ENCODE measurements at regions of chr12 and their contacts with region 1.

Region 1: GRCh38 chr12:113358381-113359132 is at the start of gene PLBD2:
- DNase-seq: peak; percentile 95 to 99 (median 99)
- ATAC-seq: peak; percentile 94
- H3K4me3 ChIP-seq: peak within 1 kb of the TSS; percentile 96
- H3K27ac ChIP-seq: peak within 1 kb of the TSS; percentile 84
- H3K4me1 ChIP-seq: peaks cover 21 to 30% of the 10 kb centered on the region in 2 experiments
- H3K27me3 ChIP-seq: no peaks in the 10 kb centered on the region
- CTCF ChIP-seq: peak in 2 of 3 experiments; percentile 17 to 24; a peak in 3 of 6 replicates
- EP300 ChIP-seq: no peak
- POLR2A ChIP-seq: no peak; the same call in none of the 2 replicates
- RAD21 ChIP-seq: peak in 1 of 2 experiments; percentile 27; a peak in 2 of 4 replicates
- polyA plus RNA-seq, gene PLBD2: 5.0 to 6.0 TPM

Region 2: DNA sequence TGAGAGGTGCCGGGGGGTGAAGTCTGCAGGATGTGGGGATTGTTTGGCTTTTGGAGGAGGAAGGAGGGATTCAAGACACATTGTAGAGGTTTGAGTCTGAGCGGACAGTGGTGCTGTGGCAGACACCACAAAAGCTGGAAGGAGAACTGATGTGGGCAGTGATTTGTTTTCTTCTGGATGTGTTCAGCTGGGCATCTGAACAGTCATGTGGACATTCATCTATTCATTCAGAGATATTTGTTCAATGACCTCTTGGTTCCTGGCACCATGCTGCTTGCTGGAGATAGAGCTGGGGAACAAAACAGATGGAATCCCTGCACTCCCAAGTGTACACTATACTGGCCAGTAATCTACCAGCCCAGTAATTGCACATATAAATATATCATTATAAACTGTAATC is 875.8 kb before region 1 on chr12:
- CTCF ChIA-PET with region 1: no interaction called
- POLR2A ChIA-PET with region 1: no interaction called
- in situ Hi-C with region 1: no loop called
- intact Hi-C with region 1: no loop called
- DNase-seq: no peak
- ATAC-seq: no peak
- H3K4me3 ChIP-seq: no peak overlapping the region
- H3K27ac ChIP-seq: no peak overlapping the region
- H3K4me1 ChIP-seq: no peaks in the 10 kb centered on the region
- H3K27me3 ChIP-seq: no peaks in the 10 kb centered on the region
- CTCF ChIP-seq: no peak
- EP300 ChIP-seq: no peak
- POLR2A ChIP-seq: no peak
- RAD21 ChIP-seq: no peak

Region 3: DNA sequence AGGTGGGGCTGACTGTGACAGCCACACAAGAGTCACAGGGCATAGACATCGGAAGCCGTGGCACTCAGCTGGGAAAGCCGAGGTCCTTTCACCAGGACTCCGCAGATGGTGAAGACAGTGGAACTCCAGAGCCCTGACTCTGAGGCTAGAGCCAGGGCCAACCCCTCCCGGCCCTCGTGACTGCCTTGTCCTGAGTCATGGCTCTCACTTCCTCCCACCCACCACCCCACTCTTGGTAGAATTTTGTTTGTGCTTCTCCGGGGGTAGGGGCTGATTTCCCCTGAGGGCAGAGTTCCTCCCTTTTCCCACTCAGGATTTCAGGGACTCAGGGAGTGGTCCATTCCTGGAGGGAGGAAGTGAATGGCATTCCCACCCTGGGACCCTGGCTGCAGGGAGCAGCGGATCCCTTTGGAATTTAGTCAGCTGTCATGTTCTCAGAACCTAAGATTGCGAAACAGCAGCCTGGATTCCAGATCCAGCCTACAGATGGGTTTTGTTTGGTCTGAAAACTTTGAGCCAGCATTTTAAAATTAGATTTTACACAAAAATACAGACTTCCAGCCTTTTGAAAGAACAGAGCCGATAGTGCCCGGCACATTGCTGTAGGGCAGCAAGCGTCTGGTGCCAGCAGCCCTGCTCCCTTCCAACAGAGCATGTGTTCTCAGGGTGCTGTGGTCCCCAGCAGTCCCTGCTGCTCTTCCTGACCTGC is 86.5 kb before region 1 on chr12:
- CTCF ChIA-PET with region 1: no interaction called
- POLR2A ChIA-PET with region 1: no interaction called
- in situ Hi-C with region 1: no loop called
- intact Hi-C with region 1: no loop called
- DNase-seq: peak; percentile 50 to 74 (median 58)
- ATAC-seq: peak; percentile 94
- H3K4me3 ChIP-seq: no peak overlapping the region
- H3K27ac ChIP-seq: peak overlapping the region; percentile 34; the same call in 2 of the 3 replicates
- H3K4me1 ChIP-seq: peaks cover 13 to 16% of the 10 kb centered on the region in 2 experiments
- H3K27me3 ChIP-seq: no peaks in the 10 kb centered on the region
- CTCF ChIP-seq: no peak
- EP300 ChIP-seq: no peak
- POLR2A ChIP-seq: no peak
- RAD21 ChIP-seq: no peak

Region 4: GRCh38 chr12:113310489-113310888 is 48.1 kb before region 1 on chr12:
- CTCF ChIA-PET with region 1: interaction called, 6 read pairs
- POLR2A ChIA-PET with region 1: no interaction called
- in situ Hi-C with region 1: no loop called
- intact Hi-C with region 1: loop called (anchors 2 kb)
- DNase-seq: peak in 1 of 4 experiments; percentile 38
- ATAC-seq: peak; percentile 20; the same call in 2 of the 3 replicates
- H3K4me3 ChIP-seq: no peak overlapping the region
- H3K27ac ChIP-seq: no peak overlapping the region
- H3K4me1 ChIP-seq: peaks cover 10 to 11% of the 10 kb centered on the region in 2 experiments
- H3K27me3 ChIP-seq: no peaks in the 10 kb centered on the region
- CTCF ChIP-seq: no peak
- EP300 ChIP-seq: no peak
- POLR2A ChIP-seq: no peak
- RAD21 ChIP-seq: peak in 1 of 2 experiments; percentile 13; a peak in 1 of 4 replicates

Region 5: GRCh38 chr12:113334786-113335540 is 23.6 kb before region 1 on chr12 and contains the start of gene SLC8B1:
- CTCF ChIA-PET with region 1: no interaction called
- POLR2A ChIA-PET with region 1: interaction called, 9 read pairs
- in situ Hi-C with region 1: no loop called
- intact Hi-C with region 1: loop called (anchors 1 kb)
- DNase-seq: peak; percentile 86 to 98 (median 96)
- ATAC-seq: peak; percentile 98
- H3K4me3 ChIP-seq: peak within 1 kb of the TSS; percentile 60
- H3K27ac ChIP-seq: peak within 1 kb of the TSS; percentile 80
- H3K4me1 ChIP-seq: peaks cover 22 to 24% of the 10 kb centered on the region in 2 experiments
- H3K27me3 ChIP-seq: no peaks in the 10 kb centered on the region
- CTCF ChIP-seq: no peak
- EP300 ChIP-seq: no peak
- POLR2A ChIP-seq: peak; percentile 85
- RAD21 ChIP-seq: no peak
- polyA plus RNA-seq, gene SLC8B1: 0.86 to 0.87 TPM

Region 6: GRCh38 chr12:113485330-113485729 is 126.8 kb after region 1 on chr12:
- CTCF ChIA-PET with region 1: no interaction called
- POLR2A ChIA-PET with region 1: no interaction called
- in situ Hi-C with region 1: no loop called
- intact Hi-C with region 1: no loop called
- DNase-seq: peak in 2 of 4 experiments; percentile 25 to 28
- ATAC-seq: no peak
- H3K4me3 ChIP-seq: no peak overlapping the region
- H3K27ac ChIP-seq: no peak overlapping the region
- H3K4me1 ChIP-seq: no peaks in the 10 kb centered on the region
- H3K27me3 ChIP-seq: peaks cover 2 to 25% of the 10 kb centered on the region in 2 experiments; a peak in 3 of 5 replicates
- CTCF ChIP-seq: no peak
- EP300 ChIP-seq: no peak
- POLR2A ChIP-seq: no peak
- RAD21 ChIP-seq: no peak

Region 7: DNA sequence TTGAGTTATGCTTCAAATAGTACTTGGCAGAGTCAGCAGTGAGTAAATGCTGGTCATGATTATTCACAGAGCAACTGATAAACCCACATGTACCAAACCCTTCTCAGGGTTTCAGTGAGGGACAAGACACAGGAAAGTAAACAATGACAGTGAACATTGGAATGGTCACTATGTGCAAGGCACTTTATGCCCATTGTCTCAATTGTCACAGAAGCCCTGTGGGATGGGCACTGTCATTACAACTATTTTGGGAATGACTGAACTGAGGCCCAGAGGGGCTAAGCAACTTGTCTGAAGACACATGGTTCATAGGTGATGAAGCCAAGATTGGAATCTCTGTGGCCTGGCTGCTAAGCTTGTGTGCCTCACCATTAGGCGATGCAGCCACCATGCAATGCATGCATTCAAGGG is 369.1 kb after region 1 on chr12:
- CTCF ChIA-PET with region 1: no interaction called
- POLR2A ChIA-PET with region 1: no interaction called
- in situ Hi-C with region 1: no loop called
- intact Hi-C with region 1: no loop called
- DNase-seq: no peak
- ATAC-seq: no peak
- H3K4me3 ChIP-seq: no peak overlapping the region
- H3K27ac ChIP-seq: no peak overlapping the region
- H3K4me1 ChIP-seq: peaks cover 0 to 10% of the 10 kb centered on the region in 2 experiments; a peak in 3 of 5 replicates
- H3K27me3 ChIP-seq: peaks cover 11 to 53% of the 10 kb centered on the region in 2 experiments; a peak in 4 of 5 replicates
- CTCF ChIP-seq: no peak
- EP300 ChIP-seq: no peak
- POLR2A ChIP-seq: no peak
- RAD21 ChIP-seq: no peak

Measured in K562 (cell line).